ENCODE measurements at regions of chr13 and their contacts with region 1.

Region 1: DNA sequence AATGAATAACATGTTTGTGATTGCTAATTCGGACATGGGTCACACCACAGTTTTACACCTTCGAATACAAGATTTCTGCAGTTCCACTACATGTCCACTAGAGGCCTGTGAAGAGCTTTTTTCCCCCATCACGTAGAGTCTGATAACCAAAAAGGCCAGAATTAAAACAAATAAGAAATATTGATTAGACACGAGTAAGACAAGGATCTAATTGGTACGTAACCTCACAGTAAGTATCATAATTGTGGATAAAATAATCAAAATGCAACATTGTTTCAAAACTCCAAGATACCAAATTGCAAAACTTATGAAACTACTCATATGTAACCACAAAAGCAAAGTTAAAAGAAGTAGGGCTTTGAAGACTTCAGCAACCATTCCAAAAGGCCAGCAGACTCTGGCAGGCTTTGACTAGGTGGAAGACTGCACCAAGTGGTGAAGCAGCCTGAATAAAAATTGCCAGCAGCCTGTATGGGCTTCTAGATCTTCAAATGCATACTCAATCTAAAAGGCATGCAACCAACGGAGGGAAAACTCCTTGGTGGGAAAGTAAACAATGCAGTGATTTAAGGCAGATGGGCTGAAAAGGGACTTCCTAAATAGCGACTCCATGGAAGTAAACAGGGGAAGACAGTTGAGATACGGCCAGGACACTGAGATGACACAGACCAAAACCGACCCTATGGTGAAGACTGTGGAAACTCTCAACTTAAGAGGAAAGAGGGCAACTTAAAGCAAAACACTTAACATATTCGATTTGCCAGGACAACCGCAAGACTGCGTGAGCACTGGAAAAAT is 56.7 kb downstream of the STARD13 start:
- DNase-seq: no peak
- H3K4me3 ChIP-seq: no peak overlapping the region
- H3K27ac ChIP-seq: no peak overlapping the region
- H3K4me1 ChIP-seq: peaks cover 0 to 11% (median 3%) of the 10 kb centered on the region in 4 experiments; a peak in 4 of 7 replicates
- H3K27me3 ChIP-seq: no peaks in the 10 kb centered on the region
- CTCF ChIP-seq: peak in 2 of 3 experiments; percentile 71 to 72; a peak in 3 of 4 replicates
- EP300 ChIP-seq: no peak
- POLR2A ChIP-seq: no peak
- RAD21 ChIP-seq: peak; percentile 87 to 90

Region 2: DNA sequence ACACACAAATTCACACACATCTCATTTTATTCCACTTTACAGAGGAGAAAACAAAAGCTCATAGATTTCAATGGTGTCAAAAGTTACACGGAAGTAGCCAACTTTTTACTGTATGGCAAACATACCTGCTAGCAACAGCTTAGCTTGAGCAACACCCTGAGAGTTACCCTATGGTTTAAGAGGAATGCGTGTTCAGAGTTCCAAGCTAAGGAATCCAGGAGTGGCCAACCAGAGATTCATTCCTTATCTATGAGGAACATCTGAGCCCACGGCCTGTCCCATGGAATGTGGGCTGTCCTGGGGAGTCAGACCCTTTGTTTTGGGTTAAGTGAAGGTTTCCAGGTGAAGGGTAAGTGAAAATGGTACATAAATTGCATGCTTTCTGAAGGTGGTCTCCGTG is 10.8 kb before region 1 on chr13:
- CTCF ChIA-PET with region 1: interaction called, 11 read pairs
- POLR2A ChIA-PET with region 1: no interaction called
- DNase-seq: no peak
- H3K4me3 ChIP-seq: no peak overlapping the region
- H3K27ac ChIP-seq: no peak overlapping the region
- H3K4me1 ChIP-seq: peaks cover 0 to 17% (median 9%) of the 10 kb centered on the region in 4 experiments; a peak in 6 of 7 replicates
- H3K27me3 ChIP-seq: no peaks in the 10 kb centered on the region
- CTCF ChIP-seq: no peak
- EP300 ChIP-seq: no peak
- POLR2A ChIP-seq: no peak
- RAD21 ChIP-seq: no peak

Region 3: DNA sequence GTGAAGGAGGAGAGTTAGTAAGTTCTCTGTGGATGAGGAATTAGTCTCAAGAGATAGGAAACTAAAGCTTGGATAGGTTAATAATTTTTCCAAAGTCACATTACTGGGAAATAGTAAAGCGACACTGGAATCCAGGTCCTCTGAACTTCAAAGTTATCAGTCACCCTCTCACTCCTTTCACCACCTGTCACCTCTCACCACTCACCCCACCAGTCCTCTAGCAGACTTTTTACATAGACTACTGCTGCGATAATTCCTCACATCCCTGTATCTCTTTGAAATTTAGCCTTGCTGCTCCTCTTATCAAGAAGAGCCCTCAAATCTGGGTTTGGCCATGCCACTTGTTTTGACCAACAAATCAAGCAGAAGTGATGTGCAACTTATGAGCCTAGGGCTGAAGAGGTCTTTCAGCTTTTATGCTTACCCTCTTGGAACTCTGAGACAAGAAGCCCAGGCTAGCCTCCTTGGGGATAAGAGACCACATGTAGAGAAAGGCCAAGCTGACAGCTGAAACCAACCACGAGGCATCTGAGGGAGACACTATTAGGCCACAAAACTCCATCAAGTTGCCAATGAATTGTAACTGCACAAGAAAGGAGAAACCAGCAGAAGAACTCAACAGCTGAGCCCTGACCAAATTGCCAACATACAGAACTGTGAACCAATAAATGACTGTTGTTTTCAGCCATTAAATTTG is 15.5 kb after region 1 on chr13:
- CTCF ChIA-PET with region 1: interaction called, 11 read pairs
- POLR2A ChIA-PET with region 1: interaction called, 3 read pairs
- DNase-seq: no peak
- H3K4me3 ChIP-seq: no peak overlapping the region
- H3K27ac ChIP-seq: no peak overlapping the region
- H3K4me1 ChIP-seq: no peaks in the 10 kb centered on the region
- H3K27me3 ChIP-seq: no peaks in the 10 kb centered on the region
- CTCF ChIP-seq: no peak
- EP300 ChIP-seq: no peak
- POLR2A ChIP-seq: no peak
- RAD21 ChIP-seq: no peak

Region 4: DNA sequence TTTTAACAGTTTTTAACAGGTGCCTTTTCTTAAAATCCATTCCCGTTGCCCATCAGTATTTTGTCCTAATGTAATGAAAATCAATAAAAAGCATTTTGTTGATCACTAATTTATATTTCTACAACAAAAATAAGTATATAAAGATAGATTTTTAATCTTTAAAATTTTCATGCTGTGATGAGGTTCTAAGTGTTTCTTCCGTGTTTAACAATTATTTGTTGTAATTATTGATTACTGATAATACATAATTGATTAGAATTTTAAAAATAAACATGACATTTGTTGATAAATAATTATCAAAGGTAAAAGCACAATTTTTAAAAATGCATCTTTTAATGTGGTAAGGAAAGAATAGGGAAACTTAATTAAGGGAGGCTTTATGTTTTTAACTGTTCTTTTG is 253.5 kb after region 1 on chr13:
- CTCF ChIA-PET with region 1: no interaction called
- POLR2A ChIA-PET with region 1: no interaction called
- DNase-seq: no peak
- H3K4me3 ChIP-seq: no peak overlapping the region
- H3K27ac ChIP-seq: no peak overlapping the region
- H3K4me1 ChIP-seq: no peaks in the 10 kb centered on the region
- H3K27me3 ChIP-seq: no peaks in the 10 kb centered on the region
- CTCF ChIP-seq: no peak
- EP300 ChIP-seq: no peak
- POLR2A ChIP-seq: no peak
- RAD21 ChIP-seq: no peak

Measured in H1 (cell line).